AG04449 (cell line): ENCODE measurements at regions of chr16 and their contacts with region 1.

Region 1: GRCh38 chr16:53080345-53081031 is 25.7 kb downstream of the CHD9 start:
- DNase-seq: no peak
- H3K4me3 ChIP-seq: peak overlapping the region; percentile 18
- CTCF ChIP-seq: no peak

Region 2: DNA sequence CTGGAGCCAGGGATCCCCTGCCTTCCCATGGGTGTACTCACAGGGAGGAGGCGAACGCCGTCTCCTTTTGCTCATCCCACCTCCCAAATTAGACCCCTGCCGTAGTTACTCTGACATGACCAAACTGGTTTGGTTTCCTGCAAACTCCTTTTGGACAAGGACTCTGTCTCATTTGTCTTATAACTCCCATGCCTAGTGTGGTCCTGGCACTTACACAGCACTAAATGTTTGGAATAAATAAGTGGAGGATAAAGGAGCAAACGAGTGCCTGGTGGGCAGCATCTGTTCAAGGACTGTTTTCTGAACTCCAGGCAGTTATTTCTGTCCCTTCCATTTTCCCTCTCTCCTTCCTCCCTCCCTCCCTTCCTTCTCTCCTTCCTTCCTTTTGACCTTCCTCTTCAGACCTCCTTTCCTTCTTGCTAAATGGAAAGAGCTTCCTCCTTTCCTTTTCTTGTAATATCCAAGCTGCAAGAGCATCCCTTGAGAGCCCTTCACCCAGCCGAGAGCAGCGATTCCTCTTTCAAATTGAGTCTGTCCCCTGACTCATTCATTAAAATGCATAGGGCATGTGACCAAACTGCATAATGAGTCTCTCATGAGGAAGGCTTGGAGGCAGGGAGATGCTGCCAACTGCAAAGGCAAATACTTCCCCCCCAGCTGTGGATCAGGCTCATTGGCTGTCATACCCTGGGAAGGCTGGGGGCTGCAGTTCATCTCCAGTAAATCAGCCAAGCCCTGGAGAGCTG is 11.2 kb after region 1 on chr16:
- CTCF ChIA-PET with region 1: interaction called, 10 read pairs
- POLR2A ChIA-PET with region 1: interaction called, 29 read pairs
- DNase-seq: peak; percentile 81
- H3K4me3 ChIP-seq: peak overlapping the region; percentile 21
- CTCF ChIP-seq: no peak

Region 3: DNA sequence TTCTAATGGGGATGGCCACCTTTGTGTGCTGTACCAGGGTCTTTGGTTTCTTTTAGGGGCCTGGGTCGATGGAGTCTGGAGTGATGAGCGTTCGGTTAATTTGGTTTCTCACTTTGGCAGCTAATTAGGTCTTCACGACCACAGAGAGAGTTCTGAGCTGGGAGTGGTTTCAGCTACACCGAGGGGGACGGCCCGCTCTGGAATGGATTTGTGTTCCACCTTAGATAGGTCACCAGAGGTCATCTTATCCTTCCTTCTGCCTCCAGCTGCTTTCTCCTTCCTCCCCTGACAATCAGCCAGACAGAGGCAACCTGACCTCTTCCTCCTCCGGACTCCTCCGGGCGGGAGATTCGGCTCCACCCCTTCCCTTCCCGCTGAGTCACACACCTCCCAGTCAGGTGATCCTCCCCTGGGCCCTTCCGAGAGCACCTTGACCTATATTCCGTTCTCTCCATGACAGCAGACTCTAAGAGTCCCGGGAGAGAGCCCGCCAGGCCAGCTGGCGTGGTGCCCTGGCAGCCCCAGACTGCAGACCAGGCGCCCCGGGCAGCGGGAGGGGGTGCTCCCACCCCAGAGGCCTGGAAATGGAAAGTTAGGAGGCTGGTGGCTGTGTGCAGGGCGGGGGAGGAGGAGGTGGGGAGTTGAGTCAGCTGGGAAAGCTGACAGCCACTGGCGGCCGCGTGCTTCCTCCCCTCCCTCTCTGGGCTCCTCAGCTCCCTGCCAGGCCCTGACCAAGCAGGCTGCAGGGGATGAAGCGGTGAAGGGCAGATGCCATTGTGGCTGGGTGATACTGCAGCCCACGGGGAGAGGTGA is 19.0 kb after region 1 on chr16:
- CTCF ChIA-PET with region 1: interaction called, 4 read pairs
- POLR2A ChIA-PET with region 1: interaction called, 20 read pairs
- DNase-seq: no peak
- H3K4me3 ChIP-seq: peak overlapping the region; percentile 47
- CTCF ChIP-seq: no peak